WTC11 (cell line): ENCODE measurements at regions of chr3 and their contacts with region 1.

Region 1: GRCh38 chr3:112321867-112322649 is 10.9 kb upstream of the CD200 start:
- DNase-seq: no peak
- ATAC-seq: peak; percentile 67
- H3K4me3 Mint-ChIP-seq: peak overlapping the region; percentile 12
- H3K27ac Mint-ChIP-seq: peak overlapping the region; percentile 88
- H3K4me1 Mint-ChIP-seq: peaks cover 52% of the 10 kb centered on the region
- H3K27me3 Mint-ChIP-seq: no peaks in the 10 kb centered on the region
- CTCF ChIP-seq: no peak

Region 2: GRCh38 chr3:112273536-112273935 is 48.5 kb before region 1 on chr3:
- CTCF ChIA-PET with region 1: no interaction called
- POLR2A ChIA-PET with region 1: no interaction called
- DNase-seq: no peak
- ATAC-seq: peak; percentile 56
- H3K4me3 Mint-ChIP-seq: no peak overlapping the region
- H3K27ac Mint-ChIP-seq: no peak overlapping the region
- H3K4me1 Mint-ChIP-seq: peaks cover 6% of the 10 kb centered on the region; the same call in 1 of the 2 replicates
- H3K27me3 Mint-ChIP-seq: no peaks in the 10 kb centered on the region; the same call in 1 of the 2 replicates
- CTCF ChIP-seq: no peak

Region 3: GRCh38 chr3:112303764-112304325 is 18.2 kb before region 1 on chr3:
- CTCF ChIA-PET with region 1: interaction called, 11 read pairs
- POLR2A ChIA-PET with region 1: interaction called, 4 read pairs
- DNase-seq: no peak
- ATAC-seq: peak; percentile 7
- H3K4me3 Mint-ChIP-seq: no peak overlapping the region
- H3K27ac Mint-ChIP-seq: no peak overlapping the region
- H3K4me1 Mint-ChIP-seq: peaks cover 21% of the 10 kb centered on the region
- H3K27me3 Mint-ChIP-seq: no peaks in the 10 kb centered on the region
- CTCF ChIP-seq: no peak

Region 4: GRCh38 chr3:112333002-112333380 is 10.9 kb after region 1 on chr3 and contains the start of gene CD200:
- CTCF ChIA-PET with region 1: interaction called, 10 read pairs
- POLR2A ChIA-PET with region 1: interaction called, 7 read pairs
- DNase-seq: peak; percentile 85
- ATAC-seq: peak; percentile 86
- H3K4me3 Mint-ChIP-seq: peak within 1 kb of the TSS; percentile 88
- H3K27ac Mint-ChIP-seq: peak within 1 kb of the TSS; percentile 96
- H3K4me1 Mint-ChIP-seq: peaks cover 40% of the 10 kb centered on the region
- H3K27me3 Mint-ChIP-seq: no peaks in the 10 kb centered on the region
- CTCF ChIP-seq: no peak
- total RNA-seq, gene CD200: 46.8 to 56.1 TPM (median 54.1 TPM) in 3 replicates